CD4-positive, alpha-beta memory T cell (primary cell): ENCODE measurements at regions of chr9 and their contacts with region 1.

Region 1: DNA sequence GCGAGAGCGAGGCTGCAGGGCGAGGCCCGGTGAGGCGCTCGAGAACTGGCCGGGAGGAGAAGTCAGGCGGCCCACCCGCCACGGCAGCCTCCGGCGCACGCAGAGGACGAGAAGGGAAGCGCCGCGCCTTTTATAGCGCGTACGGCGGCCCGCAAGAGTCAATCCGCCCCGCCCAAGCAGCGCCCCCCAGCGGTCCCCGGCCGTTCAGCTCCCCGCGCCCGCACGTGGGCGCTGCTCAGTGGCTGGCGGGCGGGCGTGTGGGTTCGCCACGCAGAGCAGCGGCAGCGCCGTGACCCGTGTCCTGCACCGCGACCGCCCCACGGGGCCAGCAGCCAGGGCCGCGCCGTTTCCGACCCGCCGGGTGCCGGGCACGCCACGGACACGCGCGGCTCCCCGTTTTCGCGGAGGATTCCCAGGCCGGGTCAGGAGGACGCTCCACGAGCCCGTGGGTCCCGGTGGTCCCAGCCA is 14.6 kb downstream of the LCN10 start:
- DNase-seq: peak; percentile 85 to 92 (median 91)
- H3K4me3 ChIP-seq: peak overlapping the region; percentile 88 to 94
- H3K4me3 Mint-ChIP-seq: peak overlapping the region; percentile 48 to 97 (median 76)
- H3K27ac ChIP-seq: peak overlapping the region; percentile 72
- H3K27ac Mint-ChIP-seq: peak overlapping the region in 2 of 7 donors; percentile 51 to 97
- H3K4me1 ChIP-seq: peaks cover 30% of the 10 kb centered on the region
- H3K4me1 Mint-ChIP-seq: peaks cover 7 to 42% (median 22%) of the 10 kb centered on the region in 4 donors
- H3K27me3 ChIP-seq: no peaks in the 10 kb centered on the region
- H3K27me3 Mint-ChIP-seq: peaks cover 0 to 4% of the 10 kb centered on the region in 2 donors

Region 2: DNA sequence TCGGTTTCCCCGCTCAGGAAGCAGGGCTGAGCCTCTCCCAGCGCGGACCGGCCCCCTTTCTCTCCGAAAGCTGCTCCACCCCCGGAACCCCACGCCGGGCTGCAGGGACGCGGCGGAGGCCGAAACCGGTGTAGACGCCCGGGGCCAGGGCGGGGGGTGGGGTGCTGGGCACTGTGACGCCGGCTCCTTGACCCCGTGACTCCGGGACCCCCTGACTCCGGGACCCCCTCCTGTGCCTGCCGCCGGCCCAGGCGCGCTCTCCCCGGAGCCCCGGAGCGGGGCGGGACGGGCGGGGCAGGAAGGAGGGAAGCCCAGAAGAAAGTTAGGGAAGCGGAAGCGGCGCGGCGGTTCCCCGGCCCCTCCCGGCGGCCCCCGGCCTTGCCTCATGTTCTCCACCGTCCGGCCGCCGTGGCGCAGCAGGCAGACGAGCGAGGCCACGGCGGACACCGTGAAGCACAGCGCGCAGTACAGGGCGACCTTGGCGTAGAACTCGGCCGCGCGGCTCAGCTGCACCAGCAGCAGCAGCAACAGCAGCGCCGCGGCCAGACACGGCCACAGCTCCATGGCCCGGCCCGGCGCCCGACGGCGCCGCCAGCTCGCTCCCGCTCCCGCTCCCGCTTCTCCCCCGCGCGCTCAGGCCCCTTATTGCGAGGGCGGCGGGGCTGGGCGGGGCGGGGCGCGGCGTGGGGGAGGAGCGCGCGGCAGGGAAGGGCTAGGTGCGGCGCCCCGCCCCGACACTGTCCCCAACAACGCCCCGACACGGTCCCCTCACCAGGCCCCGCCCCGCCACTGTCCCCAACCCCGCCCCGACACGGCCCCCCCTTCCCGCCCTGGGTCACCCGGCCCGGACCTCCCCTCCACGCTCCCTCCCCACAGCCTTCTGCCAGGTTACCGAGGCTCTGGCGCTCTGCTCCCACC is 41.1 kb before region 1 on chr9 and contains the start of gene AGPAT2:
- CTCF ChIA-PET with region 1: no interaction called
- POLR2A ChIA-PET with region 1: interaction called, 17 read pairs
- intact Hi-C with region 1: loop called (anchors 1 kb)
- DNase-seq: peak in 4 of 5 donors; percentile 38 to 40 (median 38)
- H3K4me3 ChIP-seq: peak within 1 kb of the TSS; percentile 3 to 51
- H3K4me3 Mint-ChIP-seq: peak within 1 kb of the TSS; percentile 69 to 82 (median 76)
- H3K27ac ChIP-seq: peak within 1 kb of the TSS; percentile 22
- H3K27ac Mint-ChIP-seq: peak within 1 kb of the TSS in 2 of 7 donors; percentile 47 to 77
- H3K4me1 ChIP-seq: peaks cover 11% of the 10 kb centered on the region
- H3K4me1 Mint-ChIP-seq: peaks cover 0 to 10% (median 3%) of the 10 kb centered on the region in 4 donors
- H3K27me3 ChIP-seq: no peaks in the 10 kb centered on the region
- H3K27me3 Mint-ChIP-seq: peaks cover 0 to 2% of the 10 kb centered on the region in 2 donors
- total RNA-seq, gene AGPAT2: 6.9 to 7.8 TPM

Region 3: GRCh38 chr9:136711751-136712689 is 16.1 kb before region 1 on chr9 and contains the start of gene DIPK1B:
- CTCF ChIA-PET with region 1: no interaction called
- POLR2A ChIA-PET with region 1: interaction called, 25 read pairs
- intact Hi-C with region 1: no loop called
- DNase-seq: no peak
- H3K4me3 ChIP-seq: no peak within 1 kb of the TSS
- H3K4me3 Mint-ChIP-seq: peak within 1 kb of the TSS; percentile 59 to 78 (median 68)
- H3K27ac ChIP-seq: no peak within 1 kb of the TSS
- H3K27ac Mint-ChIP-seq: peak within 1 kb of the TSS in 1 of 7 donors; percentile 51
- H3K4me1 ChIP-seq: peaks cover 4% of the 10 kb centered on the region
- H3K4me1 Mint-ChIP-seq: peaks cover 0 to 5% (median 2%) of the 10 kb centered on the region in 4 donors
- H3K27me3 ChIP-seq: peaks cover 8% of the 10 kb centered on the region
- H3K27me3 Mint-ChIP-seq: peaks cover 9 to 18% of the 10 kb centered on the region in 2 donors
- total RNA-seq, gene DIPK1B: not detected

Region 4: DNA sequence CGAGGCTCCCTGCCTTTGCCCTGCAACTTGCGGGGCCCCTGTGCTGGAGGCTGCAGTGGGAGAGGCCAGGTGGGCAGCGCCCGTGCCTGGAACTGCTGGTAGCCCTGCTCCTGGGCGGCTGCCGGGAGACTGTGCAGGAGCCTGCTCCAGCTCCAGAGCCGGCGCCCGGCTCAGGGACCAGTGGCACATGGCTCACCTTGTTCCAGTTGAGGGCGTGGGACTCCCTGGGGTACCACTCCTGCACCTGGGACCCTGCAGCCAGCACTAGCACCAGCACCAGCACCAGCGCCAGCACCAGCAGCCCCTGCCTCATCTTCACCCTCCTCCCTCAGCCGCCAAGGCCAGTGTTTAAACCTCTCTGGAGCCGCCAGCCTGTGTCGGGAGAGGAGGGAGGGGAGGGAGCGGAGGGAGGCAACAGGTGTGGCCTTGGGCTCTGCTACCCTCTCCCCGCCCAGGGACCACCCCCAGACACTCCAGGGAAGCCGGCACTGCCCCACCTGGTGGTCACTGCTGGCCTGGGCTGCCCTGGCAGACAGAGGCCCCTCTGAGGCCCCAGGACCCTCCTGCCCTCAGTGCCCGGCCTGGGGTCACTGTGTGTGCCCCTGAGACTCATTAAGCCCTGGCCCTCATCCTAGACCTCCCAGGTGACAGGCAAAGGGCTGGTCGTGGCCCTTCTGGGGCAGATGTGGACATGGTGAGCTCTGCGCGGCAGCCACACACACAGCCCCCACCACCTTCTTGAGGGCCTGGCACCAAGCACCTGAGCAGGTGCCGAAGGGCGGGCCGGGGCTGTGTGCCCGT is 14.7 kb after region 1 on chr9 and contains the start of gene LCN10:
- CTCF ChIA-PET with region 1: no interaction called
- POLR2A ChIA-PET with region 1: interaction called, 13 read pairs
- intact Hi-C with region 1: no loop called
- DNase-seq: peak in 1 of 5 donors; percentile 35
- H3K4me3 ChIP-seq: peak within 1 kb of the TSS in 1 of 2 donors; percentile 28
- H3K4me3 Mint-ChIP-seq: peak within 1 kb of the TSS in 6 of 8 donors; percentile 25 to 76 (median 68)
- H3K27ac ChIP-seq: no peak within 1 kb of the TSS
- H3K27ac Mint-ChIP-seq: no peak within 1 kb of the TSS
- H3K4me1 ChIP-seq: peaks cover 13% of the 10 kb centered on the region
- H3K4me1 Mint-ChIP-seq: peaks cover 0 to 7% (median 3%) of the 10 kb centered on the region in 4 donors
- H3K27me3 ChIP-seq: no peaks in the 10 kb centered on the region
- H3K27me3 Mint-ChIP-seq: peaks cover 0 to 3% of the 10 kb centered on the region in 2 donors
- total RNA-seq, gene LCN10: 0.90 to 1.3 TPM

Region 5: GRCh38 chr9:136807281-136808074 is 79.4 kb after region 1 on chr9 and contains the start of gene RABL6:
- CTCF ChIA-PET with region 1: no interaction called
- POLR2A ChIA-PET with region 1: interaction called, 15 read pairs
- intact Hi-C with region 1: no loop called
- DNase-seq: peak; percentile 78 to 90 (median 86)
- H3K4me3 ChIP-seq: peak within 1 kb of the TSS; percentile 61 to 74
- H3K4me3 Mint-ChIP-seq: peak within 1 kb of the TSS; percentile 87 to 93 (median 90)
- H3K27ac ChIP-seq: peak within 1 kb of the TSS; percentile 83
- H3K27ac Mint-ChIP-seq: peak within 1 kb of the TSS; percentile 91 to 96 (median 94)
- H3K4me1 ChIP-seq: peaks cover 40% of the 10 kb centered on the region
- H3K4me1 Mint-ChIP-seq: peaks cover 11 to 45% (median 30%) of the 10 kb centered on the region in 4 donors
- H3K27me3 ChIP-seq: no peaks in the 10 kb centered on the region
- H3K27me3 Mint-ChIP-seq: no peaks in the 10 kb centered on the region
- total RNA-seq, gene RABL6: 65.1 to 70.9 TPM

Region 6: GRCh38 chr9:136847827-136848392 is 119.8 kb after region 1 on chr9:
- CTCF ChIA-PET with region 1: no interaction called
- POLR2A ChIA-PET with region 1: no interaction called
- intact Hi-C with region 1: no loop called
- DNase-seq: peak; percentile 47 to 77 (median 61)
- H3K4me3 ChIP-seq: peak overlapping the region; percentile 42 to 85
- H3K4me3 Mint-ChIP-seq: peak overlapping the region; percentile 76 to 94 (median 85)
- H3K27ac ChIP-seq: no peak overlapping the region
- H3K27ac Mint-ChIP-seq: peak overlapping the region in 6 of 7 donors; percentile 29 to 96 (median 80)
- H3K4me1 ChIP-seq: peaks cover 33% of the 10 kb centered on the region
- H3K4me1 Mint-ChIP-seq: peaks cover 10 to 34% (median 16%) of the 10 kb centered on the region in 4 donors
- H3K27me3 ChIP-seq: no peaks in the 10 kb centered on the region
- H3K27me3 Mint-ChIP-seq: peaks cover 6 to 10% of the 10 kb centered on the region in 2 donors